Dendritic cell treated with granulocyte-macrophage colony-stimulating factor and Interleukin-4, amounts not matched to agents 40 ng/mL and 50 ng/mL, for 4 days (primary cell): ENCODE measurements at regions of chr1 and their contacts with region 1.

Region 1: DNA sequence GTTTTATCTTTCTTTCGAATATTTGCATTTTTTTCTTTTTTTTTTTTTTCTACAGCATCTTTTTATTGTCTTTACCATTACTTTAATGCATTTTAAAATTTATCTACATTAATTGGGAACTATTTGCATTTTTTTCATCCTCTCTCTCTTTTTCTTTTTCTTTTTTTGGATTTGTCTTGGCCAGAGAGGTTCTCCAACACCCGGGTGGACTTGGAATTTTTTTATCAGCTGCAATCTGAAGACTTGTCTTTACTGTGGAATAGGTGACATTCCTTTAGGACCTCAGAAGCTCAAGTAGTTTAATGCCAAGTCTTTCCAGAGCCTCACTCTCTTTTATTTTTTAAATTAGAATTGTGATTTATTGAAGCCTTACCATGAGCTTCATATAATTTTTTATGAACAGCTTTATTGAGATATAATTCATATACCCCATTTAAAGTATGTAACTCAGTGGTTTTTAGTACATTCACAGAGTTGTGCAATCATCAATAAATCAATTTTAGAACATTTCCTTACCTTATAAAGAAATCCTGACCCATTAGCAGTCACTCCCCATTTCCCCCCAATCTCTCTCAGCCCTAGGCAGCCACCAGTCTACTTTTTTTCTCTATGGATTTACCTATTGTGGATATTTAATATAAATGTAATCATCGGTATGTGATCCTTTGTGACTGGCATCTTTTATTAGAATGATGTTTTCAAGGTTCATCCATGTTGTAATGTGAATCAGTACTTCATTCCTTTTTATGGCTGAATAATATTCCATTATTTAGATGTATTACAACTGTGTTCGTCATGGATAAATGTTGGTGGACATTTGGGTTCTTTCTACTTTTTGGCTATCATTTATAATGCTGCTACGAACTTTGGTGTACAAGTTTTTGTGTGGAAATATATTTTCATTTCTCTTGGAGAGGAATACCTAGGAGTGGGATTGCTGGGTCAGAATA is 6.1 kb downstream of the TUFT1 start:
- H3K4me3 Mint-ChIP-seq: no peak overlapping the region
- H3K27ac Mint-ChIP-seq: no peak overlapping the region
- H3K4me1 Mint-ChIP-seq: peaks cover 18% of the 10 kb centered on the region
- H3K27me3 Mint-ChIP-seq: peaks cover 19% of the 10 kb centered on the region

Region 2: DNA sequence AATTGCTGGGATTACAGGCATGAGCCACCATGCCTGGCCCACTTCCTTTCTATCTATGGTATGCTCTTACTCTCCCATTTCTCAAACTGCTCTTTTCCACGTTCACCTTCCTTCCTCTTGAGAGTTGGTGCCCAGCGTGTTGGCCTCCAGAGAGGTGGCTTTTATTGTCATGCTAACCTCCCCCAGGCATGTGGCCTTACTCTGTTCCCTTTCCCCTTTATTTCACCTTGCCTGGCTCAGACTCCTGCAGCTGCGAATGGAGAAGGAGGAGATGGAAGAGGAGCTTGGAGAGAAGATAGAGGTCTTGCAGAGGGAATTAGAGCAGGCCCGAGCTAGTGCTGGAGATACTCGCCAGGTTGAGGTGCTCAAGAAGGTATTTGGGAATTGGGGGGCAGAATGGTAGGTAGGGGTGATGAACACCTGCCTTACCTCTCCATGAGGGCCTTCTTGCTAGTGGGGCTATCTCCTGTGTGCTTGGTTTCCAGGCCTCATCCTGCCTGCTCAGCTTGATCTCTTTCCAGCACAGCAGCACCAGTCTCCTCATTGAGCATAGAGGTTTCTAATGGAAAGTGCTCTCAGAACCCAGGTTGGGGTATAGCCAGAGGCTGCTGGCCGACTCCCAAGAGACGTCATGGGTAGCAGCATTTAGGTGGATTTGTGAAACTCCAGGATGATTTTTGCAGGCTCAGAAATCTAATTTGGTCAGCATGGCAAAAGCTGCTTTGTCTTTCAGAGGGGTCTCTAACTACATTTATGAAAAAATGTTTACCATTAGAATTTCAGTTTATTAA is 19.3 kb before region 1 on chr1:
- intact Hi-C with region 1: loop called (anchors 1 kb)
- H3K4me3 Mint-ChIP-seq: no peak overlapping the region
- H3K27ac Mint-ChIP-seq: no peak overlapping the region
- H3K4me1 Mint-ChIP-seq: no peaks in the 10 kb centered on the region
- H3K27me3 Mint-ChIP-seq: peaks cover 6% of the 10 kb centered on the region